ENCODE measurements at regions of chrX and their contacts with region 1.

Region 1: DNA sequence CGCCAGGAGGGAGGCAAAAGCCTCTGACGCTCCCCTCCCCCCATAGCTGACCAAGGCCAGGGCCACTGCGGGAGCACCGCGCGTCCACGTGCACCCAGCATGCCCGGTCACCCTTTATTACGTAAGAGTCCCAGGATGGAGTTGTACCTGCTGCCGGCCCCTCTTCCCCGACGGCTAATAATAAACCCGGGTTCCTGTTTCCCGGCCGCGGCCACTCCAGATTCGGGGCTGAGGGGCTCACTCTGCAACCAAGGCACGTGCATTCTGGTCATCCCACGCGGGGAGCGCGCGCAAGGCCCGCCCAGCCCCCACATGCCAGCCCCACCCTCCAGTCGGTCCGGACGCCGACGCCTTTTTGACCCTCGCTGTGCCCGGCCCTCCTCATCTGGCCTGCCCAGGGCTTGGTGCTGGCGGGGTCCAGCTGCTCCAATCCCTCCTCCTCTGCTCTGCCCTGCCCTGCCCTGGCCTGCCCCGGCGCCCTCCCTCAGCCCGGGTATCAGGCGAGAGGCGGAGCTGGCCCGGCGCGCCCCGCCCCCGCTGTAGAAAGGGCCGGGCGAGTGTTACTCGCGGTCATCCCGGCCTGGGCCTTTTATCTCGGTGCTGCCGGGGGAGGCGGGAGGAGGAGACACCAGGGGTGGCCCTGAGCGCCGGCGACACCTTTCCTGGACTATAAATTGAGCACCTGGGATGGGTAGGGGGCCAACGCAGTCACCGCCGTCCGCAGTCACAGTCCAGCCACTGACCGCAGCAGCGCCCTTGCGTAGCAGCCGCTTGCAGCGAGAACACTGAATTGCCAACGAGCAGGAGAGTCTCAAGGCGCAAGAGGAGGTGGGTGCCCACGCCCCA is 2.5 kb downstream of the MID1IP1 start:
- DNase-seq: no peak
- ATAC-seq: peak; percentile 78
- H3K4me3 ChIP-seq: peak overlapping the region; percentile 70
- H3K27ac ChIP-seq: peak overlapping the region; percentile 82
- H3K4me1 ChIP-seq: no peaks in the 10 kb centered on the region
- H3K27me3 ChIP-seq: no peaks in the 10 kb centered on the region
- CTCF ChIP-seq: no peak
- EP300 ChIP-seq: no peak
- POLR2A ChIP-seq: peak; percentile 84; the same call in 1 of the 2 replicates
- RAD21 ChIP-seq: no peak

Region 2: GRCh38 chrX:38768079-38768478 is 35.7 kb before region 1 on chrX:
- CTCF ChIA-PET with region 1: no interaction called
- POLR2A ChIA-PET with region 1: no interaction called
- RAD21 ChIA-PET with region 1: interaction called, 10 read pairs
- SMC1A ChIA-PET with region 1: interaction called, 5 read pairs
- in situ Hi-C with region 1: no loop called
- intact Hi-C with region 1: no loop called
- DNase-seq: no peak
- ATAC-seq: peak; percentile 62
- H3K4me3 ChIP-seq: no peak overlapping the region
- H3K27ac ChIP-seq: no peak overlapping the region
- H3K4me1 ChIP-seq: no peaks in the 10 kb centered on the region
- H3K27me3 ChIP-seq: no peaks in the 10 kb centered on the region
- CTCF ChIP-seq: peak; percentile 30 to 57 (median 31); a peak in 4 of 6 replicates
- EP300 ChIP-seq: no peak
- POLR2A ChIP-seq: no peak
- RAD21 ChIP-seq: peak; percentile 72

Region 3: DNA sequence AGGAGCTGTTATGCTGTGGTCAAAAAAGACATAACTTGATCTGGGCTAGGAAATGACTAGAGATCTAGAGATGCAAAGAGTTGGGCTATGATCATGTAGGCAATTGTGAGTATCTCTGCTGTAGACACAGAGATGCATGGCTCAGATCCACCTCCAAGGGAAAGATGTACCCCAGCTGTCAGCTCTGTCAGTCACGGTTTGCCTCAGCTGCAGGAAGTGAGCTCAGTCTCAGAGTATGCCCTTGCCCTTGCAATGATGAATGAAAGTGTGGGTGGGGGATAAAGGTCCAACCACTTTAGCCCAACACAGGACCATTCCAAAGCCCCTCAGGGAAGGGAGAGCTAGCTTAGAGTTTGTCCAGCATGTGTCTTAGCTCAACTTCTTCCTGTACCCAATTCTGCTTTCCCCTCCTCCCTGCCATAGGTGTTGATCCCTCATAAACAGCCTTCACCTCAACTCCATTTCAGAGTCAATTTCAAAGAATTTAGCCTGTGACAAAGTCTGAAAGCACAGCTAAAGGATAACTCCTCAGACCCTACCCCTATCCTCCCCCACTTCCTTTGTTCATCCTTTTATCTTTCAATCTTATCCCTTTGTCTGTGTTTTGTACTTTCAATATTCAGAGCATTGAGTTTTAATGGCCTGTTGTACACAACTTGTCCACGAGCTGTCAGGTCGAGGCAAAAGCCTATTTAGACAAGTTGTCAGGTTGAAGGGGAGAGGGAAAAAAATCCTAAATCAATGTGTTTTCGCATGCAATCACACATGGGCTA is 88.0 kb after region 1 on chrX:
- CTCF ChIA-PET with region 1: interaction called, 3 read pairs
- POLR2A ChIA-PET with region 1: no interaction called
- RAD21 ChIA-PET with region 1: interaction called, 4 read pairs
- SMC1A ChIA-PET with region 1: interaction called, 10 read pairs
- in situ Hi-C with region 1: no loop called
- intact Hi-C with region 1: no loop called
- DNase-seq: no peak
- ATAC-seq: peak; percentile 99
- H3K4me3 ChIP-seq: no peak overlapping the region
- H3K27ac ChIP-seq: no peak overlapping the region
- H3K4me1 ChIP-seq: no peaks in the 10 kb centered on the region; the same call in 1 of the 2 replicates
- H3K27me3 ChIP-seq: no peaks in the 10 kb centered on the region
- CTCF ChIP-seq: no peak
- EP300 ChIP-seq: no peak
- POLR2A ChIP-seq: no peak
- RAD21 ChIP-seq: no peak

Region 4: DNA sequence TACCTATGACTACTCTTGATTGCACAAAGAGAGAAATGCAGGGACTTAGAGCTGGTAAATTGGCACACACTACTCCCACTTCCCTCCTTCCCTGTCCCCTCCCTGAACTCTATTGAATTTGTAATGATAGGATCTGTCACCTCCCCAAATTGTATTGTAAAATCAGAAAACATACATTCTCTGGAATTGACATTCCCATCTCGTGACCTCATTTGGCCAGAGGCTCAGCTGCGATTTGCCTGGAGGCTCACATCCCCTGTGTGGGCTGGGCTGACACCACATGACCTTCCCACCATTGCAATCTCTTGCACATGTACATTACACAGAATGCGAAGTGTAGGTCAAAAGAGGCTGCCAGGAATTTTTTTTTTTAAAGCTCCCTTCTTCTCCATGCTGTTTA is 169.5 kb after region 1 on chrX:
- CTCF ChIA-PET with region 1: no interaction called
- POLR2A ChIA-PET with region 1: no interaction called
- RAD21 ChIA-PET with region 1: no interaction called
- SMC1A ChIA-PET with region 1: no interaction called
- in situ Hi-C with region 1: loop called (anchors 10 kb)
- intact Hi-C with region 1: no loop called
- DNase-seq: no peak
- ATAC-seq: no peak
- H3K4me3 ChIP-seq: no peak overlapping the region
- H3K27ac ChIP-seq: no peak overlapping the region
- H3K4me1 ChIP-seq: no peaks in the 10 kb centered on the region
- H3K27me3 ChIP-seq: no peaks in the 10 kb centered on the region
- CTCF ChIP-seq: no peak
- EP300 ChIP-seq: no peak
- POLR2A ChIP-seq: no peak
- RAD21 ChIP-seq: no peak